Activated CD4-positive, alpha-beta T cell treated with anti-CD3 and anti-CD28 coated beads for 36 hours (primary cell): ENCODE measurements at regions of chrX and their contacts with region 1.

Region 1: GRCh38 chrX:79270401-79270800 is 96.7 kb downstream of the ITM2A start:
- DNase-seq: peak; percentile 87
- ATAC-seq: peak; percentile 99
- H3K4me3 Mint-ChIP-seq: no peak overlapping the region
- H3K27ac Mint-ChIP-seq: peak overlapping the region; percentile 47
- H3K4me1 Mint-ChIP-seq: peaks cover 44% of the 10 kb centered on the region
- H3K27me3 Mint-ChIP-seq: no peaks in the 10 kb centered on the region

Region 2: DNA sequence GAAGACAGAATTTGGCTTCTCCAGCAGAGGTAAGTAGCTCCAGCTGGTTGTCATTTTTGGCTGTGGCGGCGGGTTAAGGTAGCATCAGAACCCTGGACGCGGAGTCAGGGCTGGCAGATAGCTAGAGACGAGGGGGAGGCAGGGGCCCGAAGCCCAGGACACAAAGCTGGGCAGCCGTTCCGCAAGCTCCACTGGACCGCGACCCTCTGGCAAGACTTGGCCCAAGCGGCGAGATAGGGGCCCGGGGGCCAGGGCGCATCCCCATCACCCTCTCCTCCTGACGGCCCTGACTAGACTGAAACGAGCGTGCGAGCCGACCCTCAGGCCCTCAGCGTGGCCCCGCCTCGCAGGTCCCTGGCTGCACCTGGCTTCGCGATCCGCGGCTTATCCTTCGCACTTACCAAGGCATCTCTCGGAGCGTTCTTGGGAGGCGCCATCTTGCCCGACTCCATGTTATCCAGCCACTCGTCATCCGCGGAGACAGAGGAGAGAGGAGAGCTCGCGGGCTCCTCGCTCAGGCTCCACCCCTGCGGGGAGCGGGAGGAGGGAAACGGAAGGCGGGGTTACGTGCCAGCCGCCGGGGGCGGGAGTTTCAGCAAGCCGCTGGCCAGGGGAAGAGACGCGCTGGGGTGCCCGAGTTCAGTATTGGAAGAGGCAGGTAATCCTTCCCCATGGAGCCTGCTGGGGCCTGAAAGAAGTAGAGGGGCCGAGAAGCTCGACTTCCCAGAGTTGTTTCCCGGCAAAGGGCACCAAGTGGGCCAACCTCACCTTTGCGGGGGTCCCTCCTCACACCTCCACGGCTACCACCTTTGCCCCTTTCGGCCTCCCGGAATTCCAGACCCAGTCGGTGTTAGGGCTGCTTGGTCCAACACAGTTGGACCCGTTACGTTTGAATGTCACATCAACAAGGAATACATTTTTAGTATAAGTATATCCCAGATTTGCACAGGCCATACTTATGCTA is 1131.0 kb before region 1 on chrX and contains the start of gene TAF9B:
- CTCF ChIA-PET with region 1: no interaction called
- POLR2A ChIA-PET with region 1: no interaction called
- intact Hi-C with region 1: loop called in 1 of 2 experiments (anchors 10 kb)
- DNase-seq: peak; percentile 90
- ATAC-seq: peak; percentile 95
- H3K4me3 Mint-ChIP-seq: peak within 1 kb of the TSS; percentile 84
- H3K27ac Mint-ChIP-seq: peak within 1 kb of the TSS; percentile 95
- H3K4me1 Mint-ChIP-seq: peaks cover 8% of the 10 kb centered on the region
- H3K27me3 Mint-ChIP-seq: no peaks in the 10 kb centered on the region
- total RNA-seq, gene TAF9B: 17.6 to 18.3 TPM

Region 3: DNA sequence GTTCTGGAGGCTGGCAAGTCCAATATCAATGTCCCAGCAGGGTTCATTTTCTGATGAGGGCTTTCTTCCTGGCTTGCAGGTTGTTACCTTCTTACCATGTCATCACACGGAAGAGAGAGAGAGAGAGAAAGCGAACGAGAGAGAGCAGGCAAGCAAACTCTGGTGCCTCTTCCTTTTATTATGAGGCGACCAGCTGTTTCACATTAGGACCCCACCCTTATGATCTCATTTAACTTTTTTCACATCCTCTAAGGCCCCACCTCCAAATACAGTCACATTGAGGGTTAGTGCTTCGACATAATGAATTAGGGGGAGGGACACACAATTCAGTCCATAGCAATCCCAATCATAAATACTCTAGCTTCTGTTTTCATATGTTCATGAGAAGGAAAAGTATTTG is 136.5 kb before region 1 on chrX:
- CTCF ChIA-PET with region 1: no interaction called
- POLR2A ChIA-PET with region 1: no interaction called
- intact Hi-C with region 1: no loop called
- DNase-seq: no peak
- ATAC-seq: peak; percentile 68
- H3K4me3 Mint-ChIP-seq: no peak overlapping the region
- H3K27ac Mint-ChIP-seq: peak overlapping the region; percentile 31
- H3K4me1 Mint-ChIP-seq: peaks cover 26% of the 10 kb centered on the region
- H3K27me3 Mint-ChIP-seq: no peaks in the 10 kb centered on the region

Region 4: GRCh38 chrX:81195712-81196111 is 1925.3 kb after region 1 on chrX:
- CTCF ChIA-PET with region 1: no interaction called
- POLR2A ChIA-PET with region 1: no interaction called
- intact Hi-C with region 1: no loop called
- DNase-seq: peak; percentile 70
- ATAC-seq: peak; percentile 78
- H3K4me3 Mint-ChIP-seq: no peak overlapping the region
- H3K27ac Mint-ChIP-seq: no peak overlapping the region
- H3K4me1 Mint-ChIP-seq: peaks cover 3% of the 10 kb centered on the region
- H3K27me3 Mint-ChIP-seq: no peaks in the 10 kb centered on the region